Ascending aorta (tissue), 2 donors: ENCODE measurements at regions of chr17 and their contacts with region 1.

Region 1: DNA sequence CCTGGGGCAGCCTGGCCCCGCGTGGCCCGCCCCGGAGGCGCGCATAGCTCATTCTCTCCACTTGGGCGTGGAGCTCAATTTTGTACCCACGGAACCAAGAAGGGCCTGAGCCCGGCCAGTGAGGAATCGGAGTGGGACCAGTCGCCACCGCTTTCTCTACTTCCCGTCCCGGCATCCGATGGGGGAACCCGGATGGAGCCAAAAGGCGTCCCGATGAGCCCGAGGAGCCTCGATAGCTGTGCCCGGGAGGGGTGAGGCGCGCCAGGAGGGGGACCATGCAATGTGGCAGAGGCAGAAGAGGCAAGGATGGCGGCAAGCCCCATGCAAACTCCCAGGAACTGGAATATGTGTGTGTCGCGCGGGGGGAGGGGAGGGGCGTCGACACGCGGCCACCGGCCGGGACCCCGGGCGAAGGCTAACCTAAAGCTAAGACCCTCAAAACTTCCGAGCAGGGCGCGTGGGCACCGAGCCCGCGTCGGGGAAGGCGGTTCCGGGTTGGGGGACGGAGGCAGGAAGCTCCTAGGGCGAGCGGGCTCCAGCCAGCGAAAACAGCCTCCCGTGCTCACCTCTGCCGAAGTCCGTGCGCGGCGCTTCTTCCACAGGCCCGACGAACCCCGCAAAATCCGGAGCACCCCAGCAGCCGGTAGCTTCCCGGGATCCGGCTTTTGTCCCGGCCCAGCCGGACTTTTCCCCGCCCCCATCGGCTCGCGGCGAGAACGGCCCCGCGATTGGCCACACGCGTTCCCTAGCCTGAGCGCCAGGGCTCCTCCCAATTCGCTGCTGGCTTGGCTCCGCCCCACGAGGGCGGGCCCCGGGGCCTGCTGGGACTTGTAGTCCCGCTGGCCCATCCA is at the start of gene ACLY:
- DNase-seq: peak; percentile 91 to 98
- H3K4me3 ChIP-seq: peak within 1 kb of the TSS; percentile 82 to 85
- H3K27ac ChIP-seq: peak within 1 kb of the TSS; percentile 78 to 87
- H3K4me1 ChIP-seq: peaks cover 2 to 22% of the 10 kb centered on the region in 2 donors
- H3K27me3 ChIP-seq: no peaks in the 10 kb centered on the region
- CTCF ChIP-seq: no peak
- total RNA-seq, gene ACLY: 64.4 TPM

Region 2: DNA sequence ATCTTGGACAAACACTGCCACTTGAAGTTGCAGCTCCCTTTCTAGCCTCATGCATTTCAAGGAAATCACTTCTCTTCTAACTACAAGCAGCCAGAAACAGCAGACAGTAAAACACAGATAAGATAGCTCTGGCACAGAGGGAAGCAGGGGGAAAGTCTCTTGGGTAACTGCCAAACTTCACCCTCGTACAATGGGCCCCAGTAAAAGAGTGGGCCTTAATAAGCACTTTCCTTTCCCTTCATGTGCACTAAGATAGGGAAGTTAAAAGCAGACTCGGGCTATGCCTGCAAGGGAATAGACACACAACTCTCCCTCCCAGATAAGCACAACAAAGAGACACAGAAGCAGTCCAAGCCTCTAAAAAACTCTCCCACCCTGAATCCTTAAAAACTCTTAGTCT is 764.7 kb before region 1 on chr17:
- intact Hi-C with region 1: no loop called
- DNase-seq: no peak
- H3K4me3 ChIP-seq: no peak overlapping the region
- H3K27ac ChIP-seq: no peak overlapping the region
- H3K4me1 ChIP-seq: no peaks in the 10 kb centered on the region
- H3K27me3 ChIP-seq: no peaks in the 10 kb centered on the region
- CTCF ChIP-seq: no peak

Region 3: GRCh38 chr17:41930009-41930832 is 11.7 kb after region 1 on chr17 and contains the start of gene ODAD4:
- intact Hi-C with region 1: loop called (anchors 1 kb)
- DNase-seq: peak; percentile 91 to 98
- H3K4me3 ChIP-seq: peak within 1 kb of the TSS; percentile 65 to 67
- H3K27ac ChIP-seq: peak within 1 kb of the TSS; percentile 64 to 79
- H3K4me1 ChIP-seq: peaks cover 0 to 11% of the 10 kb centered on the region in 2 donors
- H3K27me3 ChIP-seq: no peaks in the 10 kb centered on the region
- CTCF ChIP-seq: peak; percentile 43 to 69 (median 54)
- total RNA-seq, gene ODAD4: not detected